Ascending aorta (tissue), 2 donors: ENCODE measurements at regions of chr4 and their contacts with region 1.

Region 1: DNA sequence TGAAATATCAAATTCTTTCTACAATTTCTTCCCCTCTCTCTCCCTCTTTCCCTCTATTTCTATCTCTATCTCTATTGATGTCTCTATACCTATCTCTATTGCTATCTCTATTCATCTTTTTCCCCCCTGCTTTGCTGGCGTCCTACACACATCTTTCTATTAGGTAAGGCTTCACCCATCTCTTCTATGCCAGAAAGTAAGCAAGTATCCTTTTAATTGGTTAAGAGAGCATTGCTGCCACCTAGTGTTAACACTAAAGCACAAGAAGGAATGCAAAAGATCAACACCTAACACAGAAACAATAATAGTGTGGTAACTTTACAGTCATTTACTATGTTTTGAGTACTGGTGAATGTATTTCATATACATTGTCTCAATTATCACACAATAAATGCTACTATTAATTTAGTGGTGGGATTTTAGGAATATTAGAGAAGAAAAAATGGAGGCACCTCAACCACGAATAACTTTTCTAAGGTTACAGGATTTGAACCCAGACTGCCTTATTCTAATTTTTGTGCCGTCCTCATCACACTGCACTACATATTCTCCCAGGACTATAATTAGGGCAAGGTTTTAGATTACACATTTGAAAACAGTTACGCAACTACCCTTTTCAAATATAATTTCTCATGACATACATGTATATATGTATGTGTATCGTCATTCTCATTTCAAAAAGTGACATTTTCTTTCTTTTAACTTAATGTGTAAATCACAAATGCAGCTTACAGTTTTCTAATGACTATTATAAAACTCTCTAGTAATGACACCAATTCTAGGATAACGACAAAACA is 3.7 kb upstream of the C4orf36 start:
- DNase-seq: no peak
- H3K4me3 ChIP-seq: no peak overlapping the region
- H3K27ac ChIP-seq: no peak overlapping the region
- H3K4me1 ChIP-seq: peaks cover 0 to 6% of the 10 kb centered on the region in 2 donors
- H3K27me3 ChIP-seq: no peaks in the 10 kb centered on the region
- CTCF ChIP-seq: peak; percentile 60 to 74 (median 65)

Region 2: DNA sequence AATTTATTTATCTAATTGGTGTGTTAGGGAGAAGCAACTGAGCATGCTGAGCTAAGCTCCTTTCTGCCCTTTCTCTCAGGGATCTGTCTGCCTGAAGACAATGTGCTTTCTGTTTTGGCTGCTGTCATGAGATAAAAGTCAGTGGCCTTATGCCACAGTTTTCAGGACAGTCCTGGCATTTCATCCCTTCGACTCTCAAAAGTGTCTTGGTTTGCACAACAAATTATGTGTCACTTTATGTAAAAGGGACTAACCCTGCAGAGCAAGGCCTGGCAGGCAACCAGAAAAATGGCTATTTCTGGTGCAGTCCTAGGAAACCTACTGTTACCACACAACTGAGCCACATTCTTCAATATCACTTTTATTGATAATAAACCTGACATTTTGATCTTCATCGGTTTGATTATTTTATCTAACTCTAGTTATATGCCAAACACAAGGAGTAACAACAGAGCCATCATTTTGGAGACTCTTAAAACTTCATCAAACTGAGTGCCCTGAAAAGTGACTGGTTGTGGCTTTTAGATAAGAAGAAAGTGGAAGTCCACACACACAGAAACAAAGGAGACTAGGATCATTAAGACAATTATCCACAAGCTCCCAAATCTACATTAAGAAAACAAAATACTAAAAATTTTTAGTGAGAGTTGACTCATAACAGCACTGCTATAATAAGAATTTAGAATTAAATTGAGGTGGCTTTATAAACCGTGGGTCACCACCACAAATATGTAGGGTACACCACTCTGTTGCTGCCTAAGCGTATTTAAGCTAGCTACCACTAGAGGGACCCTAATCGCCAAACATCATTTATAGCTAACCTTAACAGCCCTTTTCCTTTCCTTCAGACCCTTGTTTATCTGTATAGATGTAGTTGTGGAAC is 397.7 kb before region 1 on chr4:
- intact Hi-C with region 1: loop called (anchors 2 kb)
- DNase-seq: no peak
- H3K4me3 ChIP-seq: no peak overlapping the region
- H3K27ac ChIP-seq: no peak overlapping the region
- H3K4me1 ChIP-seq: peaks cover 0 to 3% of the 10 kb centered on the region in 2 donors
- H3K27me3 ChIP-seq: no peaks in the 10 kb centered on the region
- CTCF ChIP-seq: peak; percentile 21 to 74 (median 60)

Region 3: DNA sequence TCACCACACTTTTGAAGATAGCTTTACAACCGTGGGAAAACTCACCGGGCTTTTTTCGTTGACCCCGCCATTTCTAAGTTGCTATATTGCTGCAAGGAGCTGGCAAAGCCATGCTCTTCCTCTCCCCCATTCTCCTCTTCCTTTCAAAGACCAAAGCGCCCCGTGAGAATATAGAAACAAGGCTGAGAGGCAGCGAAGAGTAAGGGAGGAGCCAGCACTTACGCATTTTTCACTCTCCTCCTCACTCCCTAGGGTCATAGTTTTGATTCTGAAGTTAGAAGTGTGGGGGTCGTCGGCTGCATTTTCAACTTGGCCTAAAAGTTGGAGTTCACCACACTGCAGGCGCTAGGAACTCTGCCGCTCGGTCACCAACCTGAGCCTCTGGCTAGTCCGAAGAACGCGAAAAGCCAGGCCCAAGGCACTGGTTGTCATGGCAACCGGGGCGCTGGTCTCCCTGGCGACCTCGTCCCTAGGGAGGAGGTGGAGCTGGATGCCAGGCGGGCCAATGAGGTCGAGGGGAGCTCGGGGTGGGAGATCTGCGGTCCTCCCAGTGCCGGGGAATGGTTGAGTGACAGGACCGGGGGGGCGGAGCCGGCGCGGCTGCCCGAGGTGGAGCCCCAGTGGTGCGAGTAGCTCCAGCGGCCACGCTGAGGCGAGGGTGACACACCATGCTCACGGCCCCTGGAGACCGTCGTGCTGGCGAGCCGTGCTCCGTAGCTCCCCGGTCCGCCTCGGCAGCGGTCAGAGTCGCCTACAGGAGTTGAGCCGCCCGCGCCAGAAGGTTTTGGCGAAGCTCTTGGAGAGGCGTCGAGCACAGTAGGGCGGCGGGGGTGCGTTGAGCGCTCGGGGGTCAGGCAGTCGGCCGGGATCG is 302.0 kb before region 1 on chr4 and contains the start of gene PTPN13:
- intact Hi-C with region 1: loop called (anchors 5 kb)
- DNase-seq: peak; percentile 95 to 99
- H3K4me3 ChIP-seq: peak within 1 kb of the TSS; percentile 59 to 82
- H3K27ac ChIP-seq: peak within 1 kb of the TSS; percentile 79 to 90
- H3K4me1 ChIP-seq: peaks cover 0 to 4% of the 10 kb centered on the region in 2 donors
- H3K27me3 ChIP-seq: no peaks in the 10 kb centered on the region
- CTCF ChIP-seq: no peak
- total RNA-seq, gene PTPN13: 20.8 TPM

Region 4: GRCh38 chr4:86834901-86835300 is 61.0 kb before region 1 on chr4:
- intact Hi-C with region 1: no loop called
- DNase-seq: no peak
- H3K4me3 ChIP-seq: no peak overlapping the region
- H3K27ac ChIP-seq: no peak overlapping the region
- H3K4me1 ChIP-seq: no peaks in the 10 kb centered on the region
- H3K27me3 ChIP-seq: no peaks in the 10 kb centered on the region
- CTCF ChIP-seq: no peak